B cell (primary cell): ENCODE measurements at regions of chr3 and their contacts with region 1.

Region 1: GRCh38 chr3:42502429-42503250 is at the start of gene VIPR1:
- DNase-seq: peak; percentile 92
- ATAC-seq: peak; percentile 98
- H3K4me3 ChIP-seq: peak within 1 kb of the TSS; percentile 58 to 82 (median 72)
- H3K4me3 Mint-ChIP-seq: peak within 1 kb of the TSS; percentile 92
- H3K27ac ChIP-seq: no peak within 1 kb of the TSS
- H3K27ac Mint-ChIP-seq: peak within 1 kb of the TSS; percentile 84
- H3K4me1 ChIP-seq: peaks cover 11 to 21% of the 10 kb centered on the region in 2 donors
- H3K4me1 Mint-ChIP-seq: peaks cover 25% of the 10 kb centered on the region
- H3K27me3 ChIP-seq: peaks cover 0 to 38% (median 16%) of the 10 kb centered on the region in 4 experiments
- H3K27me3 Mint-ChIP-seq: peaks cover 32% of the 10 kb centered on the region
- CTCF ChIP-seq: no peak
- total RNA-seq, gene VIPR1: 5.8 and 8.3 TPM in 2 replicates

Region 2: DNA sequence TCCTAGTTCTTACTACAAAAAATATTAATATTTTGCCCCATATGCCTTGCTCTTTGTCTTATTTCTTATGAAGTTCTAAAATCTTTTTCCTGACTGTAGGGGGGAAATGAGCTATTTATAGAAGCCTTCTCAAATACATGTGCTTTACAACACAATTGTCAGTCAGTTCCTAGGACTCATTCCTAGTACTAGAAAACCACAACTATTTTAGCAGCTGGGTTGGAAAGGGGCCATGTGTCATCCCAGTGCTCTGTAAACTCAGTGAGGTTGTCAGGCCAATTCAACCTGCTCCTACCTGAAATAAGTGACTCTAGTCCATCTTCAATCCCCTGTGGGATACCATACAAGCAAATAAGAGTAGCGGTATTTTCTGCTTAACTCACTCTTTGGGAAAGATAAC is 694.5 kb before region 1 on chr3:
- CTCF ChIA-PET with region 1: no interaction called
- POLR2A ChIA-PET with region 1: no interaction called
- intact Hi-C with region 1: no loop called
- DNase-seq: no peak
- ATAC-seq: no peak
- H3K4me3 ChIP-seq: no peak overlapping the region
- H3K4me3 Mint-ChIP-seq: no peak overlapping the region
- H3K27ac ChIP-seq: no peak overlapping the region
- H3K27ac Mint-ChIP-seq: no peak overlapping the region
- H3K4me1 ChIP-seq: no peaks in the 10 kb centered on the region
- H3K4me1 Mint-ChIP-seq: no peaks in the 10 kb centered on the region
- H3K27me3 ChIP-seq: no peaks in the 10 kb centered on the region
- H3K27me3 Mint-ChIP-seq: no peaks in the 10 kb centered on the region
- CTCF ChIP-seq: no peak

Region 3: GRCh38 chr3:41961750-41962679 is 540.6 kb before region 1 on chr3 and contains the start of gene ULK4:
- CTCF ChIA-PET with region 1: no interaction called
- POLR2A ChIA-PET with region 1: no interaction called
- intact Hi-C with region 1: loop called (anchors 1 kb)
- DNase-seq: peak; percentile 99
- ATAC-seq: peak; percentile 87
- H3K4me3 ChIP-seq: peak within 1 kb of the TSS; percentile 75 to 92 (median 88)
- H3K4me3 Mint-ChIP-seq: peak within 1 kb of the TSS; percentile 98
- H3K27ac ChIP-seq: peak within 1 kb of the TSS; percentile 90 to 99
- H3K27ac Mint-ChIP-seq: peak within 1 kb of the TSS; percentile 99
- H3K4me1 ChIP-seq: peaks cover 10 to 16% of the 10 kb centered on the region in 2 donors
- H3K4me1 Mint-ChIP-seq: peaks cover 19% of the 10 kb centered on the region
- H3K27me3 ChIP-seq: no peaks in the 10 kb centered on the region
- H3K27me3 Mint-ChIP-seq: no peaks in the 10 kb centered on the region
- CTCF ChIP-seq: no peak
- total RNA-seq, gene ULK4: 27.2 and 33.7 TPM in 2 replicates

Region 4: DNA sequence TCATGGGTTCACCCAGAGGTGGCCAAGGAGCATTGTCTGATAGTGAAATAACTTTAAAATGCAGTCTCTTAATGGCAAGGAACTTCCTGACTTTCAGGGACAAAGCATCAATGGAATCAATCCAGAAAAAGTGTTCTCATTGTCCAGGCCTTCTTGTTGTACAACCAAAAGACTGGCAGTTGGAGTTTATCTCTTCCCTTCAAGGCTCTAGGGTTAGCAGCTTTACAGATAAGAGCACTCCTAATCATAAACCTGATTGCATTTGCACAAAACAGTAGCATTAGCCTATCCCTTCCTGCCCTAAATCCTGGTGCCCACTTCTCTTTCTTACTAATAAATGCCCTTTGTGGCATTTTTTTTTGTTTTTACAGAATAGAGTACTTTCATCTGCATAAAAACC is 43.5 kb before region 1 on chr3:
- CTCF ChIA-PET with region 1: no interaction called
- POLR2A ChIA-PET with region 1: interaction called, 12 read pairs
- intact Hi-C with region 1: no loop called
- DNase-seq: no peak
- ATAC-seq: no peak
- H3K4me3 ChIP-seq: no peak overlapping the region
- H3K4me3 Mint-ChIP-seq: no peak overlapping the region
- H3K27ac ChIP-seq: no peak overlapping the region
- H3K27ac Mint-ChIP-seq: no peak overlapping the region
- H3K4me1 ChIP-seq: no peaks in the 10 kb centered on the region
- H3K4me1 Mint-ChIP-seq: no peaks in the 10 kb centered on the region
- H3K27me3 ChIP-seq: peaks cover 0 to 3% (median 0%) of the 10 kb centered on the region in 4 experiments
- H3K27me3 Mint-ChIP-seq: peaks cover 17% of the 10 kb centered on the region
- CTCF ChIP-seq: no peak

Region 5: GRCh38 chr3:42539869-42540714 is 37.5 kb after region 1 on chr3:
- CTCF ChIA-PET with region 1: interaction called, 56 read pairs
- POLR2A ChIA-PET with region 1: no interaction called
- intact Hi-C with region 1: loop called (anchors 1 kb)
- DNase-seq: peak; percentile 71
- ATAC-seq: peak; percentile 65
- H3K4me3 ChIP-seq: no peak overlapping the region
- H3K4me3 Mint-ChIP-seq: no peak overlapping the region
- H3K27ac ChIP-seq: no peak overlapping the region
- H3K27ac Mint-ChIP-seq: no peak overlapping the region
- H3K4me1 ChIP-seq: peaks cover 0 to 4% of the 10 kb centered on the region in 2 donors
- H3K4me1 Mint-ChIP-seq: no peaks in the 10 kb centered on the region
- H3K27me3 ChIP-seq: no peaks in the 10 kb centered on the region
- H3K27me3 Mint-ChIP-seq: no peaks in the 10 kb centered on the region
- CTCF ChIP-seq: peak; percentile 83

Region 6: GRCh38 chr3:42581709-42582473 is 79.3 kb after region 1 on chr3 and contains the start of gene SEC22C:
- CTCF ChIA-PET with region 1: interaction called, 3 read pairs
- POLR2A ChIA-PET with region 1: interaction called, 4 read pairs
- intact Hi-C with region 1: loop called (anchors 5 kb)
- DNase-seq: peak; percentile 97
- ATAC-seq: peak; percentile 89
- H3K4me3 ChIP-seq: peak within 1 kb of the TSS; percentile 52 to 87 (median 80)
- H3K4me3 Mint-ChIP-seq: peak within 1 kb of the TSS; percentile 96
- H3K27ac ChIP-seq: peak within 1 kb of the TSS; percentile 92 to 98
- H3K27ac Mint-ChIP-seq: peak within 1 kb of the TSS; percentile 98
- H3K4me1 ChIP-seq: peaks cover 14% of the 10 kb centered on the region in 2 donors
- H3K4me1 Mint-ChIP-seq: peaks cover 37% of the 10 kb centered on the region
- H3K27me3 ChIP-seq: no peaks in the 10 kb centered on the region
- H3K27me3 Mint-ChIP-seq: no peaks in the 10 kb centered on the region
- CTCF ChIP-seq: peak; percentile 73
- total RNA-seq, gene SEC22C: 44.8 and 51.4 TPM in 2 replicates

Region 7: GRCh38 chr3:42755681-42756578 is 253.3 kb after region 1 on chr3:
- CTCF ChIA-PET with region 1: no interaction called
- POLR2A ChIA-PET with region 1: no interaction called
- intact Hi-C with region 1: no loop called
- DNase-seq: no peak
- ATAC-seq: no peak
- H3K4me3 ChIP-seq: no peak overlapping the region
- H3K4me3 Mint-ChIP-seq: no peak overlapping the region
- H3K27ac ChIP-seq: no peak overlapping the region
- H3K27ac Mint-ChIP-seq: no peak overlapping the region
- H3K4me1 ChIP-seq: no peaks in the 10 kb centered on the region
- H3K4me1 Mint-ChIP-seq: no peaks in the 10 kb centered on the region
- H3K27me3 ChIP-seq: no peaks in the 10 kb centered on the region
- H3K27me3 Mint-ChIP-seq: peaks cover 2% of the 10 kb centered on the region
- CTCF ChIP-seq: peak; percentile 30

Region 8: GRCh38 chr3:43690400-43691119 is 1187.9 kb after region 1 on chr3 and contains the start of gene ABHD5:
- CTCF ChIA-PET with region 1: no interaction called
- POLR2A ChIA-PET with region 1: no interaction called
- intact Hi-C with region 1: loop called (anchors 5 kb)
- DNase-seq: peak; percentile 98
- ATAC-seq: peak; percentile 82
- H3K4me3 ChIP-seq: peak within 1 kb of the TSS; percentile 58 to 86 (median 83)
- H3K4me3 Mint-ChIP-seq: peak within 1 kb of the TSS; percentile 98
- H3K27ac ChIP-seq: peak within 1 kb of the TSS; percentile 58 to 87
- H3K27ac Mint-ChIP-seq: peak within 1 kb of the TSS; percentile 98
- H3K4me1 ChIP-seq: peaks cover 5 to 21% of the 10 kb centered on the region in 2 donors
- H3K4me1 Mint-ChIP-seq: peaks cover 27% of the 10 kb centered on the region
- H3K27me3 ChIP-seq: no peaks in the 10 kb centered on the region
- H3K27me3 Mint-ChIP-seq: no peaks in the 10 kb centered on the region
- CTCF ChIP-seq: peak; percentile 39
- total RNA-seq, gene ABHD5: 11.0 and 12.1 TPM in 2 replicates